ENCODE measurements at regions of chr19 and their contacts with region 1.

Region 1: DNA sequence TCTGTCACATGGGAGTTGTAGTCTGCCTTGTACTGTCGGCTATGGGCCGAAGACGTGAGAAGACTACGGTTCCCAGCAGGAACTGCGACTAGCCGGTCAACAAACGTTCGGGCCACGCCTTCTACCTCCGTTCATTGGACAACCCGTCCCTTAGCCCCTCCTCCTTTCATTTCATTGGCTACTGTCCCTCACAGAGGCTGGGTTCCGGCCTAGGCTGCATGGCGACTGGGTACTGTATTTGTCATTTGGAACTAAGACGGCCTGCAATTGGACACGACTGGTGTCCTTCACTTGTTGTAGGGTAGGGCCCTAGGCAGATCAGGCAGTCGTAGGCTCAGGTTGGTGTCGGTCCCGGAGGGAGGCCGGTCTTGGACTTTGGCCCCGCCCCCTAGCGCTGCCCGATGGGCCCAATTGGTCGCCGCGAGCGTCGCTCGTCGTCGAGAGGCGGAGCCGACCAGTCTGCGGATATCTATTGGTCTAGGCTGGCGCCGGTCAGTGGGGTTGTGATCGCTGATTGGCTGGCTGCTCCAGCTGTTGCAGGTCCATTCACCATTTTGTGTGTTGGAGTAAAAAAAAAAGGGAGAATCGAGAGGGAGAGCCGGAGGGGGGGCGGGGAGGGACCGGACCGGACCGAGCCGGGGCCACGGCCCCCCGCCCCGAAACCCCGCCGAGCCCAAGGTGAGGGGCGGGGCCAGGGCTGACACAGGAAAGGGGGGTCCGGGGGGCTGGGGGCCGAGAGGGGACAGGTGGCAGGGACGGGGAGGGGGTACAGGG is at the start of gene CIC:
- DNase-seq: peak; percentile 99 to 100
- H3K4me3 ChIP-seq: peak within 1 kb of the TSS; percentile 76
- H3K27ac ChIP-seq: peak within 1 kb of the TSS; percentile 70
- H3K4me1 ChIP-seq: peaks cover 20% of the 10 kb centered on the region
- H3K27me3 ChIP-seq: no peaks in the 10 kb centered on the region
- CTCF ChIP-seq: no peak
- total RNA-seq, gene CIC: 58.1 and 60.7 TPM in 2 replicates

Region 2: GRCh38 chr19:42254989-42255765 is 13.7 kb before region 1 on chr19 and contains the start of gene ERF:
- CTCF ChIA-PET with region 1: interaction called, 13 read pairs
- POLR2A ChIA-PET with region 1: interaction called, 3 read pairs
- intact Hi-C with region 1: loop called (anchors 1 kb)
- DNase-seq: peak; percentile 71 to 93
- H3K4me3 ChIP-seq: peak within 1 kb of the TSS; percentile 98
- H3K27ac ChIP-seq: 0 out of 2 replicates have a peak within 1 kb of the TSS, but pooled peaks have one; percentile 13
- H3K4me1 ChIP-seq: peaks cover 13% of the 10 kb centered on the region
- H3K27me3 ChIP-seq: no peaks in the 10 kb centered on the region
- CTCF ChIP-seq: no peak
- total RNA-seq, gene ERF: 57.4 and 79.1 TPM in 2 replicates

Region 3: DNA sequence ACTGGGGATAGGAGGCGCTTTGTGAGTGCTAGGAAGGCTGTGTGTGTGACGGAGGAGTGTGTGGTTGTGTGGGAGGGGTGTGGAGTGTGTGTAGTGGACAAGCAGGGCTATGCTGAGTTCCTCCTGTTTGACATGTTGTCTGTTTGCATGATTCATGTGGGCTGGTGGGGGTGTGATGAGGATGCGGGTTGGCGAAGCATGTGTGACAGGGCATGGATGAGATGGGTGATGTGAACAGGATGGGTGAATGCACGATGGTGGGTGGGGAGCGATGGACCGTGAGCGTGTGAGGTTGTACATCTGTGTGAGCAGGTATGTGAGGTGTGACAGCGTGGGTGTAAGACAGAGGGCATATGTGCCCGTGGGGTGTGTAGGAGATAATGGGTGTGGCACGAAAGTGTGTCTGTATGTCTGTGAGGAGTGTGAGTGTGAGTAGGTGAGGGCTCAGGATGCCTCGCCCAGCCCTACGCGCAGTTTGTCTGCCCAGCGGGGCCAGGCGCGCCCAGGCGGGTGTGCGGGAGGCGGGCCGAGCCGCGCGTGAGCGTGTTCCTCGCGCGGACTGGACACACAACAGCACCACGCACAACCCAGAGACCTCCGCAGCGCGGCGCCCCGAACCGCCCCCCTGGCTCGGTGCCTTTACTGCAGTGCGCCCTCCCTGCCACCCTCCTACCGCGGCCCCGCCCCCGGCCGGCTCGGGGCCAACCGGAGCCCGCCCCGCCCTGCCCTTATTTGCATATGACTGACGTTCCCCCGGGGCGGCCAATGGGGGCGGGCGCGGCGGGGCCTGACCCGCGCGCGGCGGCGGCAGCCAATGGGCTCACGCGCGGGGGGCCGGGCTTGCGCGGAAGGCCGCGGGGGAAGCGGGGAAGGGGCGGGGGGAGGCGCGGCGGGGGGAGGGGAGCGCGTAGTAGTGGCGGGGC is 14.5 kb after region 1 on chr19:
- CTCF ChIA-PET with region 1: interaction called, 5 read pairs
- POLR2A ChIA-PET with region 1: interaction called, 3 read pairs
- intact Hi-C with region 1: loop called (anchors 1 kb)
- DNase-seq: peak; percentile 71 to 94
- H3K4me3 ChIP-seq: peak overlapping the region; percentile 66
- H3K27ac ChIP-seq: no peak overlapping the region
- H3K4me1 ChIP-seq: peaks cover 42% of the 10 kb centered on the region
- H3K27me3 ChIP-seq: no peaks in the 10 kb centered on the region
- CTCF ChIP-seq: no peak

Measured in PC-9 (cell line).